Activated CD4-positive, alpha-beta T cell treated with anti-CD3 and anti-CD28 coated beads for 36 hours (primary cell): ENCODE measurements at regions of chr7 and their contacts with region 1.

Region 1: DNA sequence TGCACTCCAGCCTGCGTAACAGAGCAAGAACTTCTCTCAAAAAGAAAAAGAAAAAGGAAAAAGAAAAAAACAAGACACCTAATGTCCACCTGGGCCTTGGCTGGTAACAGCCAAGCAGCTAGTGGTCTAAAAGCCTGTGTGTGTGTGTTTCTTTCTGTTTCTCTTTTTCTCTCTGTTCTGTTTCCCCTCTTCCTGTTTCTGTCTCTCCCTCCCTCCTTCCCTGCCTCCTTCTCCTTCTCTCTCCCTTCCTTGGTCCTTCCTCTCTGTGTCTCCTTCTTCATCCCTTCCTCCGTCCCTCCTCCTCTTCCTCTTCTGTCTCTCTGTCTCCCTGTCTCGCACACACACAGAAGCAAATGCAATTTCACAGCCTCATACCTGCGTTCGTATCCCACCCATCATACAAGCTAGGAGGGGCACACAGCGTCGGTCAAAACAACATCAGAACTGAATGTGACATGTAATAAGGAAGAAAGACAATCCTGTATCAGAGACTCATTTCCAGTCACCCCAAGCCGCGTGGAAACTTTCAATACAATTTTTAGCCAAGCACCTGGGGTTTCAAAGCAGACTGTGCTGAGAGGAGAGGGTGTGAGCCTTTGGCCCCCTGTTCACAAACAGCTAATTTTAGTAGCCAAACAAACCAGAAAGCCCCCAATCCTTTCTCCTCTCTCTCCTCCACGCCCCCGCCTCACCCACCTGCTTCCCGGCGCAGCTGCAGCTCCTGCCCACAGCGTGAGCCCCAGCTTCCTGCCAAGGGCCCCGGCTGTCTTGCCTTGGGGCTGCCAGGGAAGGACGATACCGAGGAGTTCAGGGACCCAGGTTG is 50.2 kb upstream of the GNA12 start:
- DNase-seq: peak; percentile 83
- ATAC-seq: peak; percentile 89
- H3K4me3 Mint-ChIP-seq: peak overlapping the region; percentile 69
- H3K27ac Mint-ChIP-seq: peak overlapping the region; percentile 98
- H3K4me1 Mint-ChIP-seq: peaks cover 29% of the 10 kb centered on the region
- H3K27me3 Mint-ChIP-seq: no peaks in the 10 kb centered on the region

Region 2: GRCh38 chr7:2934211-2934731 is 39.9 kb after region 1 on chr7:
- CTCF ChIA-PET with region 1: interaction called, 3 read pairs
- POLR2A ChIA-PET with region 1: interaction called, 5 read pairs
- intact Hi-C with region 1: loop called in 1 of 2 experiments (anchors 2 kb)
- DNase-seq: peak; percentile 82
- ATAC-seq: peak; percentile 98
- H3K4me3 Mint-ChIP-seq: peak overlapping the region; percentile 43
- H3K27ac Mint-ChIP-seq: peak overlapping the region; percentile 100
- H3K4me1 Mint-ChIP-seq: peaks cover 20% of the 10 kb centered on the region
- H3K27me3 Mint-ChIP-seq: no peaks in the 10 kb centered on the region

Region 3: DNA sequence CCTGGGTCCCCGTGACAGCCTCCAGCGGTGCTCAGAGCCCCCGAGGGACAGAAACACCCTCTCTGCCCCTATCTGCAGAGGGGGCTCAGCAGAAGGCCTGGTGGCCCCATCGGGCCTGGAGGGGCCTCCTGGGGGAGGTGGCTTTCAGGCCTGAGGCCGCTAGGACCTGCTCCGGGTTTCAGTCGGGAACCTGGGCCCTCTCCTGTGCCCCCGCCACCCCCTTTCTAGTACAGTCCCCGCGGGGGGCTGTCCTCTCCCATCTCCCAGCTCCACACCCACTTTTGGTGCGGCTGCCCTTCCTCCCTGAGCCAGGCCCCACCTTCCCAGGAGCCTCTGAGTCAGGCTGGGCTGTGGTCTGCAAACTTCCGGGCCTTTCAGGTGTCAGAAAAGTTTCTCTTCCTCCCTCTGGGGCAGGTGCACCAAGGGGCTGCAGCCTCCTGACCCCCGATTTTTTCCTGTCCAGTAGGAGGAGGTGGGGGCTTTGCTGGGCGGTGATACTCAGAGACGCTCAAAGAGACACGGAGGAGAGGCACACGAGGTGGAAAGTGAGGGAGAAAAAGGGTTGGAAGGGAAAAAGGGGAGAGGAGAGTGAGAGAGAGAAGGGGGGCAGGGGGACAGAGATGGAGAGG is 148.6 kb after region 1 on chr7:
- CTCF ChIA-PET with region 1: no interaction called
- POLR2A ChIA-PET with region 1: no interaction called
- intact Hi-C with region 1: loop called in 1 of 2 experiments (anchors 2 kb)
- DNase-seq: peak; percentile 86
- ATAC-seq: peak; percentile 80
- H3K4me3 Mint-ChIP-seq: peak overlapping the region; percentile 97
- H3K27ac Mint-ChIP-seq: peak overlapping the region; percentile 97
- H3K4me1 Mint-ChIP-seq: peaks cover 55% of the 10 kb centered on the region
- H3K27me3 Mint-ChIP-seq: no peaks in the 10 kb centered on the region

Region 4: GRCh38 chr7:3154912-3155494 is 260.7 kb after region 1 on chr7:
- CTCF ChIA-PET with region 1: interaction called, 3 read pairs
- POLR2A ChIA-PET with region 1: interaction called, 3 read pairs
- intact Hi-C with region 1: loop called in 1 of 2 experiments (anchors 2 kb)
- DNase-seq: peak; percentile 80
- ATAC-seq: peak; percentile 72
- H3K4me3 Mint-ChIP-seq: no peak overlapping the region
- H3K27ac Mint-ChIP-seq: no peak overlapping the region
- H3K4me1 Mint-ChIP-seq: peaks cover 26% of the 10 kb centered on the region
- H3K27me3 Mint-ChIP-seq: peaks cover 2% of the 10 kb centered on the region

Region 5: DNA sequence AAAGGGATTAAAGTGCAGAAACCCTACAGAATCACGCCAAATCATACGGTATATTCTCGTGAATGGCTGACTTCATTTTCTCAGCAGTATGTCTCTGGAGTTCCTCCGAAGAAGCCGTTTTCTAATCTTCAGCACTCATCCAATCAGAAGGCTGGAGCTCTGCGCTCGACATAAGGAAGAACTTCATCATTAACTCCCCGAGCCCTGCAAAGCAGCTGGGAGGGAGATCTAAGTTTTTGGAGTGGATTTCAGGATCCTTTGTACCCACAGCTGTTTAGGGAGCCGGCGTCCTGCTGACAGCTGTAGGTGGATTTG is 366.0 kb after region 1 on chr7:
- CTCF ChIA-PET with region 1: interaction called, 3 read pairs
- POLR2A ChIA-PET with region 1: interaction called, 10 read pairs
- intact Hi-C with region 1: no loop called
- DNase-seq: no peak
- ATAC-seq: no peak
- H3K4me3 Mint-ChIP-seq: no peak overlapping the region
- H3K27ac Mint-ChIP-seq: no peak overlapping the region
- H3K4me1 Mint-ChIP-seq: no peaks in the 10 kb centered on the region
- H3K27me3 Mint-ChIP-seq: peaks cover 15% of the 10 kb centered on the region

Region 6: DNA sequence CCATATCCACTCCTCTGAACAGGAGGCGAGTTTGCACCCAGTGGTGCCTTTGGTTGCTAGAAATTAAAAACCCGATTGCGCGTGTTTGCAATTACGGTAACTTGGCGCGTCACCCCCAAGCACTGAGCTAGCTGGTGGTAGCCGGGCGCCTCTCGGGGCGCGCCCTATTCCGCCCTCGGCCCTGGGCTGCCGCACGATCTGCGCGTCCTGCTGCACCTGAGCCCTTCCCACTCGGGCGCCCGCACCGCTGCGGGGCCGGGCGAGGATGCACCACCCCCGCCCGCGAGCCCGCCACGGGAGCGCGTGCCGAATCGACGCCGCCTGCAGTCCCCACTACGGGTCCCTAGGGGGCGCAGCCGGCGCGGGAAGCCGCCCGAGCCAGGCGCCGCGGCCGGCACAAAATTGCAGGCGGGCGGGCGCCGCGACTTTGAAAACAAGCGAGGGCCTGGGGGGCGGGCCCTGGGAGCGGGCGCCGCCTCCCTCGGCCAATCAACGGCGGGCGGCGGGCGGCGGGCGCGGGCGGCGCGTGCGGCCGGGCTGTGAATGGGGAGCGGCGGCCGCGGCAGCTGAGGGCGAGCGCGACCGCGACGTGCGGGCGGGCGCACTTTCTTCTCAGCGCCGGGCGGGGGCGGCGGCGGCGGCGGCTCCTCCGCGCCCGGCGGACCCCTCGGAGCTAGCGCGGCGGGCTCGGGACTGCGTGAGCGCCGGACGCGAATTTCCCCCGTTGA is 406.5 kb after region 1 on chr7 and contains the start of gene SDK1:
- CTCF ChIA-PET with region 1: no interaction called
- POLR2A ChIA-PET with region 1: no interaction called
- intact Hi-C with region 1: loop called in 1 of 2 experiments (anchors 2 kb)
- DNase-seq: peak; percentile 96
- ATAC-seq: peak; percentile 86
- H3K4me3 Mint-ChIP-seq: peak within 1 kb of the TSS; percentile 75
- H3K27ac Mint-ChIP-seq: no peak within 1 kb of the TSS
- H3K4me1 Mint-ChIP-seq: peaks cover 12% of the 10 kb centered on the region
- H3K27me3 Mint-ChIP-seq: peaks cover 22% of the 10 kb centered on the region
- total RNA-seq, gene SDK1: 1.1 to 1.9 TPM